ENCODE measurements at regions of chr6 and their contacts with region 1.

Region 1: DNA sequence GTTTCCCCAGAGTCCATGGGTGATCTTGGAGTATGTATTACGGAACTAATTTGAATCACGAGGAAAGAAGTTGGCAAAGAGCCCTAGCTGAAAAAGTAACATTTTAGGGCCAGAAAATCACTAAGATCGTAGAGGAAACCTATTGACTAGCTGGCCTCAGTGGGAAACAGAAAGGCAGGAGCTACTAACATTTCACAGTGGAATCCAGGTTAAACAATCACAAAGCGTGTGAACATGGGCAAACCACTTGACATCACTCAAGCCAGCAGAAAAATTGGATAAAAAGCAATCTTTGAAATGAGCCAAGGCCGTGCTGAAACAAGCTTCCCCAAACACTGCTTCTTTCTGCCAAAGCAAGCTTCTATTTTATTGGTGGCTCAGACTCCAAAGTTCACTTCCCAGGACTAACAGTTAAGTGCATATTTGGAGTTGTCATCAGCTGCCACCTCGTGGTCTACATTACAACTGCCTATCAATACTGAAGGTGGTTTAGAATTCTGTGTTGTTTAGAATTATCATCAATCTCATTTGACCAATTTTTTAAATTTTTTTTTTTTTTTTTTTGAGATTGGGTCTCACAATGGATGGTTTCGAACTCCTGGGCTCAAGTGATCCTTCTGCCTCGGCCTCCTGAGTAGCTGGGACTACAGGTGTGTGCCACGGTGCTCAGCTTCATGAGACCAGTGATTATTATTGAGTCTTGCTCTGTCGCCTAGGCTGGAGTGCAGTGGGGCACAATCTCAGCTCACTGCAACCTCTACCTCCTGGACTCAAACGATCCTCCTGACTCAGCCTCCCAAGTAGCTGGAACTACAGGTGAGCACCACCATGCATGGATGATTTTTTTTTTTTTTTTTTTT is 10.6 kb downstream of the RPS10 start:
- DNase-seq: peak; percentile 68
- H3K4me3 Mint-ChIP-seq: no peak overlapping the region
- H3K27ac Mint-ChIP-seq: no peak overlapping the region
- H3K4me1 Mint-ChIP-seq: peaks cover 5% of the 10 kb centered on the region
- H3K27me3 Mint-ChIP-seq: no peaks in the 10 kb centered on the region
- CTCF ChIP-seq: peak; percentile 54

Region 2: DNA sequence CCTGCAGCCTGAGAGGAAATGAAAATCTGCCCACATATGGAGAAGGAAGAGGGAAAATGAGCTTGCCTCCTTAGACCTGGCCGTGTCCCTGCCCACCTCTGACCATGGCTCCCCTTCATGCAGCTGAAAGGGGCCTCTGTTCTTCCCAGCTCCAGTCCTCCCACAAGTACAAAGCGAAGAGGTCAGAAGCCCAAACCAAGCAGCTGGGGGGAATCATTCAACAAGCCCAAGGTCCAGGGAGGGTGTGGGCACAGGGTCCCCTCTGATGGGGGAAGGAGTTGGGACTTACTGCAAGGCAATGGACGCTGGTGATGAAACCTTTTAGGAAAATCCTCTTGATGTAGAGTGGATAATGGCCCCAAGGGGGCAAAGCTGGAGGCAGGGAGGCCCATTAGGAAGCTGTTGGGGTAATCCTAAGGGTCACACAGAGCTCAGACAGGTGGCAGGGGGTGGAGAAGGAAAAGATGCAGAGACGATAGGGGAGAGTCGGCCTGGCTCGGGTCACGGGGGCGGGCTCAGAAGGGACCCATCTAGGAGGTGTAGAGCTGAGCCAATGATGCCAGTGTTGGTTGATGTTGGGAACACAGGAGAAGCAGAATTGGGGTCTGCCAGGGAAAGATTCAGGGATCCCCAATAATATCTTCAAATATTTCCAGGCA is 253.2 kb before region 1 on chr6:
- CTCF ChIA-PET with region 1: interaction called, 10 read pairs
- POLR2A ChIA-PET with region 1: no interaction called
- intact Hi-C with region 1: loop called (anchors 1 kb)
- DNase-seq: no peak
- H3K4me3 Mint-ChIP-seq: no peak overlapping the region
- H3K27ac Mint-ChIP-seq: no peak overlapping the region
- H3K4me1 Mint-ChIP-seq: no peaks in the 10 kb centered on the region
- H3K27me3 Mint-ChIP-seq: peaks cover 38% of the 10 kb centered on the region
- CTCF ChIP-seq: no peak

Region 3: GRCh38 chr6:34196126-34196830 is 219.0 kb before region 1 on chr6:
- CTCF ChIA-PET with region 1: interaction called, 53 read pairs
- POLR2A ChIA-PET with region 1: interaction called, 5 read pairs
- intact Hi-C with region 1: loop called (anchors 1 kb)
- DNase-seq: peak; percentile 62
- H3K4me3 Mint-ChIP-seq: peak overlapping the region; percentile 66
- H3K27ac Mint-ChIP-seq: no peak overlapping the region
- H3K4me1 Mint-ChIP-seq: peaks cover 7% of the 10 kb centered on the region
- H3K27me3 Mint-ChIP-seq: no peaks in the 10 kb centered on the region
- CTCF ChIP-seq: peak; percentile 97

Region 4: GRCh38 chr6:34425498-34426410 is 10.5 kb after region 1 on chr6 and contains the start of gene RPS10:
- CTCF ChIA-PET with region 1: interaction called, 35 read pairs
- POLR2A ChIA-PET with region 1: interaction called, 55 read pairs
- intact Hi-C with region 1: no loop called
- DNase-seq: peak; percentile 89
- H3K4me3 Mint-ChIP-seq: peak within 1 kb of the TSS; percentile 96
- H3K27ac Mint-ChIP-seq: peak within 1 kb of the TSS; percentile 100
- H3K4me1 Mint-ChIP-seq: peaks cover 16% of the 10 kb centered on the region
- H3K27me3 Mint-ChIP-seq: no peaks in the 10 kb centered on the region
- CTCF ChIP-seq: no peak
- total RNA-seq, gene RPS10: 1,490 and 1,644 TPM in 2 replicates

Measured in MCF 10A (cell line).